ENCODE measurements at regions of chr15 and their contacts with region 1.

Region 1: DNA sequence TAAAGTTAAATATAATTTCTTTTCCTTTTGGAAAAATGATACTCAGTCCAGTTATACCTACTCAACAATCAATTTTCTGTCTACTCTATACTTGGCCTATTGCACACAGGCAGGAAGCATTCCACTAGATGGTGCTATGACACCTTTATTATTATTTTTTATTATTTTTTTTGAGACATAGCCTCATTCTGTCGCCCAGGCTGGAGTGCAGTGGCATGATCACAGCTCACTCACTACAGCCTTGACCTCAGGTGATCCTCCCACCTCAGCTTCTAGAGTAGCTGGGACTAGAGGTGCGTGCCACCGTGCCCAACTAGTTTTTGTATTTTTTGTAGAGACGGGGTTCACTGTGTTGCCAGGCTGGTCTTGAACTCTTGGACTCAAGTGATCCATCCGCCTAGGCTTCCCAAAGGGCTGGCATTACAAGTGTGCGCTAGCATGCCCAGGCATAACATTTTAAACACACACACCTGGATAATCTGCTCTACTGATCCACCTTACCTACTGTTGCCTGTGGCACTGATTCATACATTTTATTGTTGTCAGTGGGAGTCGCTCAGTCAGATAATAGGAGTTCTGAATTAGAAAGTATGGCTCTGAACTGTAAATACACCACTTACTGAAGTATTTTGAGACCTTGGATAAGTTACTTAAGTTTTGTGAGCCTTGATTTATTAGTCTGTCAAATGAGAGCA is 56.2 kb downstream of the EIF3J start:
- DNase-seq: peak; percentile 12
- ATAC-seq: peak; percentile 90
- H3K4me3 ChIP-seq: no peak overlapping the region
- H3K27ac ChIP-seq: no peak overlapping the region
- H3K4me1 ChIP-seq: no peaks in the 10 kb centered on the region
- H3K27me3 ChIP-seq: no peaks in the 10 kb centered on the region
- CTCF ChIP-seq: peak; percentile 55 to 64 (median 63); a peak in 5 of 6 replicates
- POLR2A ChIP-seq: no peak
- RAD21 ChIP-seq: peak; percentile 61

Region 2: GRCh38 chr15:44654858-44655257 is 61.7 kb after region 1 on chr15:
- CTCF ChIA-PET with region 1: no interaction called
- POLR2A ChIA-PET with region 1: no interaction called
- RAD21 ChIA-PET with region 1: no interaction called
- intact Hi-C with region 1: loop called (anchors 10 kb)
- DNase-seq: no peak
- ATAC-seq: no peak
- H3K4me3 ChIP-seq: no peak overlapping the region
- H3K27ac ChIP-seq: no peak overlapping the region
- H3K4me1 ChIP-seq: no peaks in the 10 kb centered on the region
- H3K27me3 ChIP-seq: no peaks in the 10 kb centered on the region
- CTCF ChIP-seq: no peak
- POLR2A ChIP-seq: no peak
- RAD21 ChIP-seq: no peak

Region 3: DNA sequence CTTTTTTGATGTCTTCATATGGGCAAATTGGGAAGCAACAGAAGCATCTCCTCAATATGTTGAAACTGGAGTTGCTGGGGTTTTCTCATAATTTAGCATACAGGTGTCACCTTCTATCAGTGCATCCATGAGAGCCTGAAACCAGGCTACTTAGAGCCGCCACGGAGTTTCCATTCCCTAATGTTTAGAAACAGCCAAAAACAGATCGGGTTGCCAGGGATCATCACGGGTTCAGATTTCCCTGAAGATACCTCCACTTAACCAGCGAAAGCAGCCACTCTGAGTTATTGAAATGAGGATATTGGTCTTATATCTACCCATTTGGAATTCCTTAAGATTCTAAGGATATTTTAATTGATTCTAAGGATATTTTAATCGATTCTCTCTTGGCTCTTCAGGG is 377.8 kb after region 1 on chr15:
- CTCF ChIA-PET with region 1: no interaction called
- POLR2A ChIA-PET with region 1: no interaction called
- RAD21 ChIA-PET with region 1: no interaction called
- intact Hi-C with region 1: no loop called
- DNase-seq: no peak
- ATAC-seq: no peak
- H3K4me3 ChIP-seq: no peak overlapping the region
- H3K27ac ChIP-seq: no peak overlapping the region
- H3K4me1 ChIP-seq: no peaks in the 10 kb centered on the region
- H3K27me3 ChIP-seq: no peaks in the 10 kb centered on the region
- CTCF ChIP-seq: no peak
- POLR2A ChIP-seq: no peak
- RAD21 ChIP-seq: no peak

Region 4: GRCh38 chr15:45225506-45226273 is 632.5 kb after region 1 on chr15:
- CTCF ChIA-PET with region 1: no interaction called
- POLR2A ChIA-PET with region 1: no interaction called
- RAD21 ChIA-PET with region 1: no interaction called
- intact Hi-C with region 1: no loop called
- DNase-seq: no peak
- ATAC-seq: peak; percentile 42; the same call in 1 of the 2 replicates
- H3K4me3 ChIP-seq: no peak overlapping the region
- H3K27ac ChIP-seq: no peak overlapping the region
- H3K4me1 ChIP-seq: no peaks in the 10 kb centered on the region
- H3K27me3 ChIP-seq: no peaks in the 10 kb centered on the region
- CTCF ChIP-seq: peak in 1 of 3 experiments; percentile 12; a peak in 1 of 6 replicates
- POLR2A ChIP-seq: no peak
- RAD21 ChIP-seq: no peak